ENCODE measurements at regions of chr7 and their contacts with region 1.

Region 1: GRCh38 chr7:151244196-151244840 is 4.2 kb downstream of the SMARCD3 start:
- H3K4me3 ChIP-seq: no peak overlapping the region
- H3K27ac ChIP-seq: no peak overlapping the region
- H3K4me1 ChIP-seq: peaks cover 3% of the 10 kb centered on the region; the same call in 1 of the 2 replicates
- CTCF ChIP-seq: peak; percentile 45; the same call in 1 of the 2 replicates

Region 2: DNA sequence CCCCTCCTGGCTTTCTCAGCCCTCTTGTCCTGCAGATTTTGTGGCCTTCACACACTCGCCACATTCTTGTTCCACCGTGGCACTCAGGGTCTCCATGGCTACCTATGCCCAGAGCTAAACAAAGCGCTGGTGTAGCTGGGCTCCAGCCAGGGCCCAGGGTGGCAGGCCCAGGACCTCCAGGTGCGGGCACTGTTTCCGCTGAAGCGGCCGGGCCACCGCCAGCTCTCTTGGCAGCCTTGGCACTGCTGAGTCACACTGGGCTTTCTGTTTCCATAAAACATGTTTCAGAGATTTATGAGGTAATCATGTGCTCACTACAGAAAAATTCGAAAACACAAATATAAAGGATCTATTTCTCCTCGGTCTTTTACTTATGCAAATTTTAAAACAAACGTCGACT is 340.7 kb before region 1 on chr7:
- CTCF ChIA-PET with region 1: no interaction called
- POLR2A ChIA-PET with region 1: no interaction called
- H3K4me3 ChIP-seq: no peak overlapping the region
- H3K27ac ChIP-seq: no peak overlapping the region
- H3K4me1 ChIP-seq: no peaks in the 10 kb centered on the region
- CTCF ChIP-seq: no peak

Region 3: GRCh38 chr7:151038951-151039849 is 205.1 kb before region 1 on chr7:
- CTCF ChIA-PET with region 1: no interaction called
- POLR2A ChIA-PET with region 1: no interaction called
- H3K4me3 ChIP-seq: no peak overlapping the region
- H3K27ac ChIP-seq: peak overlapping the region; percentile 13
- H3K4me1 ChIP-seq: peaks cover 6% of the 10 kb centered on the region
- CTCF ChIP-seq: no peak

Region 4: GRCh38 chr7:151206914-151207313 is 37.4 kb before region 1 on chr7:
- CTCF ChIA-PET with region 1: interaction called, 11 read pairs
- POLR2A ChIA-PET with region 1: no interaction called
- H3K4me3 ChIP-seq: no peak overlapping the region
- H3K27ac ChIP-seq: no peak overlapping the region
- H3K4me1 ChIP-seq: no peaks in the 10 kb centered on the region
- CTCF ChIP-seq: no peak

Region 5: DNA sequence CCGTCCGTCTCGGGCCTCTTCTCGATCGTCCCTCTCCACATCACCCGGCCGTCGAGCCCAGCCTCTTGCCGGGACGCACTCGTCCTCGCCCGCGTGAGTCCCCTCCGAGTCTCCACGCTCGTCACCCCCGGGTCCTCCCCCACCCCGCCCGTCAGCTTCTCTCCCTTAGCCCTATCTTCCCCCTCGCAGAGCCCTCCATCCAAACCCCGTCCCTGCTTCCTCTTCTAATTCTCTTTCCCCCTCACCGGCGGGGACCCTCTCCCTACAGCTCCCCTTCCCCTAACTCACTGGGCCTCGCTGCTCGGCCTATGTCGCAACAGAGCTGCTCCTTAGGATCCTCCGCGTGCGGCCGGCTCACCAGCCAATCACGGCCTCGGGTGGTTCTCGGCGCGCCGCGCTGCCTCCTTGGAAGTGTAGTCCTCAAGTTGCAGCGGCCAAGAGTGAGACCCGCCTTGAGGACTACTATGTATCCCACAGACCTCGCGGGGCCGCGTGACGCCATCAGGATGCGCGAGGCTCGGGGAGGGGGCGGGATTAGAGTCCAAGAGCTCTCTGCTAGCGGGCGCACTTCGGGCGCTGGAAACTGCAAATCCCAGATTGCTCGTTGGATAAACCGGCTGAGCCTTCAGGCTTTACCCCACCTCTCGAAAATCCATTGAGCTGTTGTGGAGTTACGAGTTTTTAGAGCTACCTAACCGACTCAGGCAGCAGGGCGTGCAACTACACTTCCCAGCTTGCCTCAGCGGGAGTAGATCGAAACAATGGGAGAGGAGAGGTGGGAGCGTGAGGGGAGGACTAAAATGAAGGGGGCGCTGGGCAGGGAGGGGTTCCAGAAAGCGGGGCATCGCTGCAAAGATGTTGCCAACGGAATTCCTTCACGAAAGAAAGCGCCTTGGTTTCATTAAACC is 17.2 kb before region 1 on chr7 and contains the start of gene ABCF2:
- CTCF ChIA-PET with region 1: interaction called, 43 read pairs
- POLR2A ChIA-PET with region 1: interaction called, 23 read pairs
- H3K4me3 ChIP-seq: peak within 1 kb of the TSS; percentile 90
- H3K27ac ChIP-seq: peak within 1 kb of the TSS; percentile 46
- H3K4me1 ChIP-seq: peaks cover 3% of the 10 kb centered on the region; the same call in 1 of the 2 replicates
- CTCF ChIP-seq: peak; percentile 66; the same call in 1 of the 2 replicates

Region 6: GRCh38 chr7:151232091-151232916 is 12.0 kb before region 1 on chr7 and contains the start of gene CHPF2:
- CTCF ChIA-PET with region 1: interaction called, 43 read pairs
- POLR2A ChIA-PET with region 1: interaction called, 23 read pairs
- H3K4me3 ChIP-seq: peak within 1 kb of the TSS; percentile 93
- H3K27ac ChIP-seq: peak within 1 kb of the TSS; percentile 59
- H3K4me1 ChIP-seq: peaks cover 3% of the 10 kb centered on the region; the same call in 1 of the 2 replicates
- CTCF ChIP-seq: no peak

Region 7: GRCh38 chr7:151304856-151305255 is 60.5 kb after region 1 on chr7:
- CTCF ChIA-PET with region 1: interaction called, 17 read pairs
- POLR2A ChIA-PET with region 1: no interaction called
- H3K4me3 ChIP-seq: no peak overlapping the region
- H3K27ac ChIP-seq: no peak overlapping the region
- H3K4me1 ChIP-seq: no peaks in the 10 kb centered on the region
- CTCF ChIP-seq: no peak

Region 8: GRCh38 chr7:151524845-151525244 is 280.5 kb after region 1 on chr7:
- CTCF ChIA-PET with region 1: no interaction called
- POLR2A ChIA-PET with region 1: no interaction called
- H3K4me3 ChIP-seq: no peak overlapping the region
- H3K27ac ChIP-seq: no peak overlapping the region
- H3K4me1 ChIP-seq: no peaks in the 10 kb centered on the region
- CTCF ChIP-seq: no peak

Measured in HEK293 (cell line).